Stomach (tissue), 19 donors: ENCODE measurements at regions of chr2 and their contacts with region 1.

Region 1: GRCh38 chr2:162002623-162003240 is 71.3 kb downstream of the DPP4 start:
- DNase-seq: no peak
- H3K4me3 ChIP-seq: no peak overlapping the region
- H3K27ac ChIP-seq: no peak overlapping the region
- H3K4me1 ChIP-seq: no peaks in the 10 kb centered on the region
- H3K27me3 ChIP-seq: no peaks in the 10 kb centered on the region
- CTCF ChIP-seq: no peak
- EP300 ChIP-seq: no peak
- POLR2A ChIP-seq: no peak

Region 2: DNA sequence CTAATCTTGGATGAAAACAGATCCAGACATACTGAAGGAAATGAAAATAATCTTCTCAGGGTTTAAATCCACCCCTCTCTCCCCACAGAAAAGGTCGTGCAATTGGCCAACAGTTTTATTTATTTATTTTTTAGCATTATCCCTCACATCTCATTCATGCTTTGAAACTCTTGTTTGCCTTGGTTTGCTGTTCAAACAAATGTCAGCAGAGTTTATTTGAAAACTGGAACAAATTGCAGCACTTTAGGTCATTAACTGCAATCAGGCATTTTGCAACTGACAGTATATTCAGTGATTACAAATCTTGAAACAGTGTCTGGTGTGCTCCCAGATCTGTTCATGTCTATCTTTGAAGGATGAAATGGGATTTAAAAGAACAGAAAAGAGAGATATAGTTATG is 157.9 kb before region 1 on chr2:
- intact Hi-C with region 1: no loop called
- DNase-seq: peak in 1 of 2 donors; percentile 17
- H3K4me3 ChIP-seq: no peak overlapping the region
- H3K27ac ChIP-seq: no peak overlapping the region
- H3K4me1 ChIP-seq: no peaks in the 10 kb centered on the region
- H3K27me3 ChIP-seq: no peaks in the 10 kb centered on the region
- CTCF ChIP-seq: no peak
- EP300 ChIP-seq: no peak
- POLR2A ChIP-seq: no peak

Region 3: DNA sequence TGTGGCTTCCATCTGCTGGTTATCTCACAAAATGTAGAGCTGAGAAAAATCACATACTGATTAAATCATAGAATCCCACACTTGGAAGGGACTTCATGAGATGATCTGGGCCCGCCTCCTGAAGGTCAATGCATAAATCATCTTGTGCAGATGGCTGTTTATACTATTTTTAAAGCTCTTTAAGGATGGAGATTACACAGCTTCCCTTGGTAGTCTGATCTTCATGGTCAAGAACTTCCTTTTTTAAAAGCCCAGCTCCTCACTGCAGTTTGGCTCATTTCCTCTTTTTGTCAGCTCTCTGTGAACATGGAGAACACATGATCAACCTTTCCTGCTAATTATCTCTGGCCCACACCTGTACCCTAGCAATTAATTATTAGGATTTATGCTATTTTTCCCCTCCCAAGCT is 123.4 kb after region 1 on chr2:
- intact Hi-C with region 1: loop called (anchors 5 kb)
- DNase-seq: peak in 1 of 2 donors; percentile 73
- H3K4me3 ChIP-seq: no peak overlapping the region
- H3K27ac ChIP-seq: no peak overlapping the region
- H3K4me1 ChIP-seq: peaks cover 0 to 3% (median 0%) of the 10 kb centered on the region in 4 donors
- H3K27me3 ChIP-seq: no peaks in the 10 kb centered on the region
- CTCF ChIP-seq: no peak
- EP300 ChIP-seq: no peak
- POLR2A ChIP-seq: no peak

Region 4: DNA sequence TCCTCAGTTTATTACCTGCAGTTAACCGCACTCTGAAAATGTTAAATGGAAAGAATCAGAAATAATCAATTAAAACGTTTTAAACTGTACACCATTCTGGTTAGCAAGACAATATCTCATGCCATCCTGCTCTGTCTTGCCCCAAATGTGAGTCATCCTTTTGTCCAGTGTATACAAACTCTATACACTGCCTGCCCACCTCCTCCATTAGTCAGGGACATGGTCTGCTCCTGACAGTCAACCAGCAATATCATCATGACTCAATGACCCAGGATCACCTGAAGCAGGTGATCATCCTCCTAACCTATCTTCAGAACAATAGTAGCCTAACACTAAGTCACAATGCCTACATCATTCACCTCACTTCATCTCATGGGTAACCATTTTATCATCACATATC is 621.2 kb after region 1 on chr2:
- intact Hi-C with region 1: no loop called
- DNase-seq: no peak
- H3K4me3 ChIP-seq: no peak overlapping the region
- H3K27ac ChIP-seq: no peak overlapping the region
- H3K4me1 ChIP-seq: no peaks in the 10 kb centered on the region
- H3K27me3 ChIP-seq: no peaks in the 10 kb centered on the region
- CTCF ChIP-seq: no peak
- EP300 ChIP-seq: no peak
- POLR2A ChIP-seq: no peak